ENCODE measurements at regions of chr7 and their contacts with region 1.

Region 1: DNA sequence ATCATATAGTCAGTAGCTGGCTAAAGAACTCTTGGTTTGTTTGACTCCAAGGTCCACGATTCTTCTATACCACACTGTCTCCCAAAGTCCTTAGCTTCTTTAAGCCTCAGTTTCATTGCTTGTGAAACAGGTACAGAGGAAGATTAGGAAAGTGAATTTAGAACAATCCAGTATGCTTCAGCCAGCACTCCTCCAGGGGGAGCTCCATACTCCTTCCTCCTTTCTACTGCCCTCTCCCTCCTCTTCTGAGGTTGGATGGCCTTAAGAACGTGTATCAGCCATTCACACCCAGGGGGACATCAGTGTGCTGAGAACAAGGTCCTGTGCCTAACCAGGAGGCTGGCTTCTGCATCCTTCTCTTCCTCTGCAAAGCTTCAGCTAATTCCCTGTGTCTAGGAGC is 54.8 kb upstream of the CALD1 start:
- DNase-seq: no peak
- H3K4me3 ChIP-seq: no peak overlapping the region
- H3K27ac ChIP-seq: no peak overlapping the region
- H3K4me1 ChIP-seq: peaks cover 5 to 9% of the 10 kb centered on the region in 2 experiments
- H3K27me3 ChIP-seq: no peaks in the 10 kb centered on the region
- CTCF ChIP-seq: peak; percentile 61
- EP300 ChIP-seq: no peak
- RAD21 ChIP-seq: peak; percentile 58

Region 2: DNA sequence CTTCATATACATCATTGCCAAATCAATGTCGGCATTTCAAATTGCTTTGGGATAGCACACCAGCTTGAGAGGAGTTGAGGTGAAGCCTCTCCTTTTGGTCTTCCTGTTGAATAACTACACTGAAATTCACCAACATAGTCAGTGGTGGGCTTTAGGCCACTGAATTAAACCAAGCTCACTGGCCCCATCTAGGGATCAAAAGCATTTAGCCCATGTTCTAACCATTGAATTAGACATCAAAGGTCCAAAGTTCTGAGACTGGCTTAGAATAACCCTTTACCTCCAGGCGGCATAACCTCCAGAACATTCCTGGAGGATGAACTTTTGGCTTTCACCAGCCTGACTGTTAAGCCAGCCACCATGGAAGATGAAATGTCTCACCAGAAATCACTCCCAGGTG is 23.3 kb before region 1 on chr7:
- CTCF ChIA-PET with region 1: interaction called, 12 read pairs
- POLR2A ChIA-PET with region 1: no interaction called
- DNase-seq: peak; percentile 48
- H3K4me3 ChIP-seq: no peak overlapping the region
- H3K27ac ChIP-seq: no peak overlapping the region
- H3K4me1 ChIP-seq: no peaks in the 10 kb centered on the region; a peak in 2 of 4 replicates
- H3K27me3 ChIP-seq: no peaks in the 10 kb centered on the region
- CTCF ChIP-seq: peak; percentile 62
- EP300 ChIP-seq: no peak
- RAD21 ChIP-seq: peak; percentile 66

Region 3: GRCh38 chr7:134736381-134736780 is 11.8 kb after region 1 on chr7:
- CTCF ChIA-PET with region 1: interaction called, 10 read pairs
- POLR2A ChIA-PET with region 1: no interaction called
- DNase-seq: no peak
- H3K4me3 ChIP-seq: no peak overlapping the region
- H3K27ac ChIP-seq: no peak overlapping the region
- H3K4me1 ChIP-seq: peaks cover 0 to 2% of the 10 kb centered on the region in 2 experiments; a peak in 2 of 4 replicates
- H3K27me3 ChIP-seq: no peaks in the 10 kb centered on the region
- CTCF ChIP-seq: no peak
- EP300 ChIP-seq: no peak
- RAD21 ChIP-seq: no peak

Measured in SK-N-SH (cell line).